ENCODE measurements at regions of chr3 and their contacts with region 1.

Region 1: DNA sequence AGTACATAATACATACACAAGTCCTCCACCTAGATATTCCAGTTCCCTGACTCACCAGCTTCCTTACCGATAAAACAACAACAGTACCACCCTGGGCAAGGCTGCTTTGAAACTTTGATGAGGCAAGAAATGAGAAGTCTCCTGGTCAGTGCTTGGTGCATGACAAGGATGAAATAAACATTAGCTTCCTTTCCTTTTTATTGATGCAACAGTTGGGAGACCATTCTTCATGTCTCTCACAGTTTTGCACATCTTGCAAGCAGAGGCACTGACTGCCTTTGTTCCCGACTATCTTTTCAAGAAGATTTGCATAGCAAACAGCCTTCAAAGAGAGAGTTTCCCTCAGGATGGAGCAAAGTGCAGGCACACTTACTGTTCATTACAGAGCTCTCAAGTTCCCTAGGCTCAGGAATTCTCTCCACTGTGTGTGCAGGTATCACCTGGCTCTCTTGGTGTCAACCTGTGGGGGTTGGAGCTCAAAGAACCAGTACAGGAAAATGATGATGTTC is 65.2 kb downstream of the MYLK start:
- DNase-seq: no peak
- H3K4me3 ChIP-seq: no peak overlapping the region
- H3K27me3 ChIP-seq: no peaks in the 10 kb centered on the region
- CTCF ChIP-seq: no peak

Region 2: DNA sequence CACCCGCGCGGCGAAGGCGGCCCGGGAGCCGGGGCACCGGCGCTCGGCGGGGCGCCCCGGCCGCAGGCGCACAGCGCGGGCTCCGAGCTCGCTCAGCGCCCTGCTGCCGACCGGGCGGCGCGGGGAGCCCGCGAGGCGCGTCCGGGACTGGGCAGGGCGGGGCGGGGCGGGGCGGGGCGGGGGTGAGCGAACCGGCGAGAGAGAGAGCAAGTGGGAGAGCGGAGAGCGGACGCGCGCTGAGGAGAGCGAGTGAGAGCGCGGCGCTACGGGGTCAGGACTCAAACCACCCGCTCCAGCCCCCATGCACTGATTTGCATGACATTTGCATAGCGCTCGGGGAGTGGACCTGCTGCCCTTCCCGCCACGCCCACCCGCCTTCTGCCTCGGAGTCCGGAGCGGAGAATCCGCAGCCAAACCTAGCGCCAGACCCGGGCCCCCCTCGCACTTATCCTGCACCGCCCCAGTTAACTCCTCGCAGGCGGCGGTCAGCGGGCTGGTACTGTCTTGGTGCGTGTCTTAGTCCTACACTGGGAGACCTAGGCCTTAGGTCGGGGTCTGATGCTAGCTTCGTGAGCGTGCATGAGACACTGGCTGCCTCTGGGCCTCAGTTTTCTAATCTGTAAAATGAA is 65.3 kb after region 1 on chr3 and contains the start of gene MYLK:
- CTCF ChIA-PET with region 1: no interaction called
- POLR2A ChIA-PET with region 1: interaction called, 12 read pairs
- DNase-seq: peak; percentile 85
- H3K4me3 ChIP-seq: peak within 1 kb of the TSS; percentile 87
- H3K27me3 ChIP-seq: no peaks in the 10 kb centered on the region
- CTCF ChIP-seq: no peak
- polyA plus RNA-seq, gene MYLK: 407 and 734 TPM in 2 replicates

Measured in BJ (cell line).